ENCODE measurements at regions of chr11 and their contacts with region 1.

Region 1: DNA sequence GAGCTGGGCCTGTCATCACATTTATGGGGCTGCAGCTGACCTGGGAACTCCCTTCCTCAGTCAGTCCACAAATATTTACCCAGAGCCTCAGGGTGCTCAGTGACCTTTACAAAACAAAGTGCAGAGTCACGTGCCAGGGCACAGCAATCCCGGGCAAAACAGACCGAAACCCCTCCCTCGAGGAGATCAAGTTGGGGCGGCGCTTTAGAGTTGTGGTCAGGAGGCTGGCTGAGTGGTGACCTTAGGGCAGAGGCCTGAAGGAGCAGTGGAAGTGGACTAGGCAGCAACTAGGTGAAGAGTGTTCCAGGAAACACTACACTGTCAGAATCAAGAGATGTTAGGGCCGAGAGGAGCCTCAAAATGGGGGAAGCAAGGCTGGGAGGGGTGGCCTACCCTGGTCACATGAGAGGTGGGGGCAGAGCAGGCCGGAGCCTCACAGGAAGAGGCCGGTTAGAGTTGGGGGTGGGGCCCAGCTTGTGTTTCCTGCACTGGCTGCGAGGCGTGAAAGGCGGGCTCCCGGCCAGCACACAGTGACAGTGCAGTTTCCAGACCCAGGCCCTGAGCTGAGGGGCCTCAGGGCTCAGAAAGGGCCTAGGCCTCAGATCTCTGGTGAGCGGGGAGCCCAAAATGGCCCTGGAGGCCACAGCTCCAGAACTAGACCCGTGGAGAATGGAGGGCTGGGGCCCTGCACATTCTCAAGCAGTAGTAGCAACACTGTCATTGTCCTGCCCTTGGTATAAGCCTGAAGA is 3.7 kb upstream of the NEAT1 start:
- DNase-seq: peak; percentile 99
- ATAC-seq: peak; percentile 51

Region 2: GRCh38 chr11:65382033-65382807 is 36.7 kb before region 1 on chr11 and contains the start of gene SLC25A45:
- intact Hi-C with region 1: loop called (anchors 2 kb)
- DNase-seq: peak; percentile 95
- ATAC-seq: peak; percentile 94
- total RNA-seq, gene SLC25A45: 5.6 TPM

Region 3: GRCh38 chr11:65497141-65498041 is 78.5 kb after region 1 on chr11:
- intact Hi-C with region 1: loop called (anchors 1 kb)
- DNase-seq: peak; percentile 100
- ATAC-seq: peak; percentile 87

Region 4: GRCh38 chr11:65558002-65558931 is 139.4 kb after region 1 on chr11 and contains the start of gene LTBP3:
- intact Hi-C with region 1: loop called (anchors 1 kb)
- DNase-seq: peak; percentile 92
- ATAC-seq: peak; percentile 90
- total RNA-seq, gene LTBP3: 72.3 TPM